CD4-positive, alpha-beta memory T cell (primary cell): ENCODE measurements at regions of chr19 and their contacts with region 1.

Region 1: GRCh38 chr19:37594304-37594981 is at the starts of genes ZNF540 and ZNF571:
- DNase-seq: peak; percentile 88 to 96 (median 92)
- H3K4me3 ChIP-seq: peak within 1 kb of the TSS; percentile 91 to 92
- H3K4me3 Mint-ChIP-seq: peak within 1 kb of the TSS; percentile 94 to 99 (median 97)
- H3K27ac ChIP-seq: peak within 1 kb of the TSS; percentile 98
- H3K27ac Mint-ChIP-seq: peak within 1 kb of the TSS; percentile 97 to 99 (median 99)
- H3K4me1 ChIP-seq: peaks cover 24% of the 10 kb centered on the region
- H3K4me1 Mint-ChIP-seq: peaks cover 21 to 47% (median 30%) of the 10 kb centered on the region in 4 donors
- H3K27me3 ChIP-seq: no peaks in the 10 kb centered on the region
- H3K27me3 Mint-ChIP-seq: no peaks in the 10 kb centered on the region
- total RNA-seq, gene ZNF540: 24.2 to 24.5 TPM
- total RNA-seq, gene ZNF571: 10.1 to 14.2 TPM

Region 2: GRCh38 chr19:37077934-37078725 is 516.3 kb before region 1 on chr19 and contains the start of gene ZNF420:
- CTCF ChIA-PET with region 1: no interaction called
- POLR2A ChIA-PET with region 1: interaction called, 3 read pairs
- intact Hi-C with region 1: loop called (anchors 2 kb)
- DNase-seq: peak; percentile 85 to 92 (median 87)
- H3K4me3 ChIP-seq: peak within 1 kb of the TSS; percentile 61 to 88
- H3K4me3 Mint-ChIP-seq: peak within 1 kb of the TSS; percentile 90 to 100 (median 98)
- H3K27ac ChIP-seq: peak within 1 kb of the TSS; percentile 73
- H3K27ac Mint-ChIP-seq: peak within 1 kb of the TSS; percentile 85 to 99 (median 95)
- H3K4me1 ChIP-seq: peaks cover 23% of the 10 kb centered on the region
- H3K4me1 Mint-ChIP-seq: peaks cover 22 to 43% (median 27%) of the 10 kb centered on the region in 4 donors
- H3K27me3 ChIP-seq: no peaks in the 10 kb centered on the region
- H3K27me3 Mint-ChIP-seq: no peaks in the 10 kb centered on the region
- total RNA-seq, gene ZNF420: 25.0 to 28.6 TPM

Region 3: DNA sequence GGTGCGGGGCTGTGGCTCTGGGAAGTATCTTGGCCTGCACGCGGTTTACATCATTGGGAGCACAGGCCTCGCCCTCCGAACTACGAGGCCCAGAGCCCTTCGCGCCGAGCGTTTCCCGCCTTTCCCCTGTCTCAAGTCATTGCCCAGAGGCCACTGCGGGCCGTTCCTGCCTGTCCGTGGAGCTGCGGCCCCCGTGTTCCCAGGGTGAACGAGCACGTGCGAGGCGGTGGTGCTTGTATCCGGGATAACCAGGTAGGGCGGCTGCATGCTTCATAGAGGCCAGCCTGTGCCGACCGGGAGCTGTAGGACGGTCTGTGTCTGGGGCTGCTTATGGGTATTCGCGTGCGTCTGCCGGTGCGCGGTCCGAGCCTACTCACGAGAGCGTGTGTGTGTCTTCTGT is 191.0 kb before region 1 on chr19:
- CTCF ChIA-PET with region 1: no interaction called
- POLR2A ChIA-PET with region 1: no interaction called
- intact Hi-C with region 1: no loop called
- DNase-seq: no peak
- H3K4me3 ChIP-seq: no peak overlapping the region
- H3K4me3 Mint-ChIP-seq: no peak overlapping the region
- H3K27ac ChIP-seq: no peak overlapping the region
- H3K27ac Mint-ChIP-seq: no peak overlapping the region
- H3K4me1 ChIP-seq: no peaks in the 10 kb centered on the region
- H3K4me1 Mint-ChIP-seq: no peaks in the 10 kb centered on the region
- H3K27me3 ChIP-seq: no peaks in the 10 kb centered on the region
- H3K27me3 Mint-ChIP-seq: no peaks in the 10 kb centered on the region

Region 4: DNA sequence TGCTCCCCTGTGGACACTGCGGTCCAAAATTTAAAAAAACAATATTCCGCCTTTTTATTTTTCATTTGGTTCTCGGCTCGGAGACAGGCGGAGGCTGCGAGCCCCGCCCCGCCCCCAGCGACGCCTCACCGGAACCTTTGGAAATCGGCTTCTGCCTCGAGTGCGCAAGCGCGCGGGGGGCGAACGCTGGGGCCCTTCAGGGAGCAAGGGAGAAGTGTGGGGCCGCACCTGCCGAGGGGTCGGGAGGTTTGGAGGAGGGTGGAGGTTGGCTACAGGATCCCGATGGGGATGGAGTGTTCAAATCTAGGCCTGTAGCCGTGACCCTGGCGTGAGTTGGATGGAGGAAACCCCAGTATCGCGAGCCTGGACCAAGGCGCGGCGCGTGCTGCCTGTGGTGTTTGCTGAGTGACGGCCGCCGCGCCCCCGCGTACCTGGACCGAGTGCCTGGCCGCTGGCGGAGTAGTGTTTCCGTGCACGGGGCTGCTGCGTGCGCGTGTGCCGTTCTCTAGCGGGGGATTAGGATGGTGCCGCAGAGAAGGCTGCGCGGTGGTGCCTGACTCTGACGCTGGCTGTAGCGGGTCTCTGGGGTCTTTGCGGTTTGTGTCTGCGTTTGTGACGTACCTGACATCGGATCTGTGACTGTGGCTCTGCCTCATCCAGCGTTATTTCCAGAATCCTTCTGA is 61.4 kb after region 1 on chr19:
- CTCF ChIA-PET with region 1: interaction called, 3 read pairs
- POLR2A ChIA-PET with region 1: interaction called, 18 read pairs
- intact Hi-C with region 1: loop called (anchors 1 kb)
- DNase-seq: peak; percentile 83 to 85 (median 85)
- H3K4me3 ChIP-seq: peak overlapping the region; percentile 73 to 78
- H3K4me3 Mint-ChIP-seq: peak overlapping the region; percentile 83 to 96 (median 95)
- H3K27ac ChIP-seq: peak overlapping the region; percentile 81
- H3K27ac Mint-ChIP-seq: peak overlapping the region; percentile 92 to 98 (median 95)
- H3K4me1 ChIP-seq: peaks cover 20% of the 10 kb centered on the region
- H3K4me1 Mint-ChIP-seq: peaks cover 18 to 40% (median 26%) of the 10 kb centered on the region in 4 donors
- H3K27me3 ChIP-seq: no peaks in the 10 kb centered on the region
- H3K27me3 Mint-ChIP-seq: no peaks in the 10 kb centered on the region

Region 5: GRCh38 chr19:37719111-37719926 is 124.9 kb after region 1 on chr19 and contains the start of gene ZNF607:
- CTCF ChIA-PET with region 1: no interaction called
- POLR2A ChIA-PET with region 1: interaction called, 10 read pairs
- intact Hi-C with region 1: no loop called
- DNase-seq: peak; percentile 73 to 79 (median 78)
- H3K4me3 ChIP-seq: peak within 1 kb of the TSS; percentile 48 to 94
- H3K4me3 Mint-ChIP-seq: peak within 1 kb of the TSS; percentile 89 to 94 (median 92)
- H3K27ac ChIP-seq: peak within 1 kb of the TSS; percentile 59
- H3K27ac Mint-ChIP-seq: peak within 1 kb of the TSS; percentile 31 to 97 (median 95)
- H3K4me1 ChIP-seq: peaks cover 19% of the 10 kb centered on the region
- H3K4me1 Mint-ChIP-seq: peaks cover 7 to 19% (median 12%) of the 10 kb centered on the region in 4 donors
- H3K27me3 ChIP-seq: no peaks in the 10 kb centered on the region
- H3K27me3 Mint-ChIP-seq: no peaks in the 10 kb centered on the region
- total RNA-seq, gene ZNF607: 11.8 to 13.0 TPM